ENCODE measurements at regions of chr2 and their contacts with region 1.

Region 1: GRCh38 chr2:96145036-96145847 is at the start of gene DUSP2:
- DNase-seq: peak; percentile 96
- ATAC-seq: peak; percentile 47
- H3K4me3 Mint-ChIP-seq: peak within 1 kb of the TSS; percentile 98
- H3K27ac Mint-ChIP-seq: peak within 1 kb of the TSS; percentile 98
- H3K4me1 Mint-ChIP-seq: peaks cover 53% of the 10 kb centered on the region
- H3K27me3 Mint-ChIP-seq: no peaks in the 10 kb centered on the region
- CTCF ChIP-seq: no peak
- total RNA-seq, gene DUSP2: 311 to 313 TPM

Region 2: GRCh38 chr2:96103761-96104486 is 41.3 kb before region 1 on chr2:
- CTCF ChIA-PET with region 1: no interaction called
- POLR2A ChIA-PET with region 1: no interaction called
- intact Hi-C with region 1: no loop called
- DNase-seq: no peak
- ATAC-seq: no peak
- H3K4me3 Mint-ChIP-seq: no peak overlapping the region
- H3K27ac Mint-ChIP-seq: no peak overlapping the region
- H3K4me1 Mint-ChIP-seq: no peaks in the 10 kb centered on the region
- H3K27me3 Mint-ChIP-seq: no peaks in the 10 kb centered on the region
- CTCF ChIP-seq: no peak

Region 3: GRCh38 chr2:96157651-96158553 is 12.7 kb after region 1 on chr2:
- CTCF ChIA-PET with region 1: interaction called, 21 read pairs
- POLR2A ChIA-PET with region 1: interaction called, 690 read pairs
- intact Hi-C with region 1: no loop called
- DNase-seq: peak; percentile 99
- ATAC-seq: peak; percentile 73
- H3K4me3 Mint-ChIP-seq: peak overlapping the region; percentile 42
- H3K27ac Mint-ChIP-seq: peak overlapping the region; percentile 93
- H3K4me1 Mint-ChIP-seq: peaks cover 92% of the 10 kb centered on the region
- H3K27me3 Mint-ChIP-seq: no peaks in the 10 kb centered on the region
- CTCF ChIP-seq: no peak

Region 4: DNA sequence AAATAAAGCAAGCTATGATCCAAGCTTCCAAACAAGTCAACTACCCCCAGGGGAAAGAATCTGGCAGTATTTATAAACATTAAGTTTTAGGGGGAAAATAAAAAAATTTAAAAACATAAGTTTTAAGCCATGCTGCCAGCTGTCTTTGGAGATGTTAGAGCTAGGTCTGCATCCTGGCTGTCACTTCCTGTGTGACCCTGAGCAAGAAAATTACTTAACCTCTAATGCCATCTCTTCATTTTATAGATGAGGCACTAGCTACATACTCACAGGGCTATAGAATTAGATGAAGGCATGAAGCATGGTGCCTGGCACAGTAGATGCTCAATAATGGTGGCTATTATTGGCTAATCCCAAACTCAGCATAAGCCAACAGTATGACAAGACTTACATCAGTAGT is 35.3 kb after region 1 on chr2:
- CTCF ChIA-PET with region 1: interaction called, 540 read pairs
- POLR2A ChIA-PET with region 1: interaction called, 109 read pairs
- intact Hi-C with region 1: no loop called
- DNase-seq: no peak
- ATAC-seq: peak; percentile 45
- H3K4me3 Mint-ChIP-seq: no peak overlapping the region
- H3K27ac Mint-ChIP-seq: no peak overlapping the region
- H3K4me1 Mint-ChIP-seq: peaks cover 12% of the 10 kb centered on the region
- H3K27me3 Mint-ChIP-seq: no peaks in the 10 kb centered on the region
- CTCF ChIP-seq: no peak

Region 5: DNA sequence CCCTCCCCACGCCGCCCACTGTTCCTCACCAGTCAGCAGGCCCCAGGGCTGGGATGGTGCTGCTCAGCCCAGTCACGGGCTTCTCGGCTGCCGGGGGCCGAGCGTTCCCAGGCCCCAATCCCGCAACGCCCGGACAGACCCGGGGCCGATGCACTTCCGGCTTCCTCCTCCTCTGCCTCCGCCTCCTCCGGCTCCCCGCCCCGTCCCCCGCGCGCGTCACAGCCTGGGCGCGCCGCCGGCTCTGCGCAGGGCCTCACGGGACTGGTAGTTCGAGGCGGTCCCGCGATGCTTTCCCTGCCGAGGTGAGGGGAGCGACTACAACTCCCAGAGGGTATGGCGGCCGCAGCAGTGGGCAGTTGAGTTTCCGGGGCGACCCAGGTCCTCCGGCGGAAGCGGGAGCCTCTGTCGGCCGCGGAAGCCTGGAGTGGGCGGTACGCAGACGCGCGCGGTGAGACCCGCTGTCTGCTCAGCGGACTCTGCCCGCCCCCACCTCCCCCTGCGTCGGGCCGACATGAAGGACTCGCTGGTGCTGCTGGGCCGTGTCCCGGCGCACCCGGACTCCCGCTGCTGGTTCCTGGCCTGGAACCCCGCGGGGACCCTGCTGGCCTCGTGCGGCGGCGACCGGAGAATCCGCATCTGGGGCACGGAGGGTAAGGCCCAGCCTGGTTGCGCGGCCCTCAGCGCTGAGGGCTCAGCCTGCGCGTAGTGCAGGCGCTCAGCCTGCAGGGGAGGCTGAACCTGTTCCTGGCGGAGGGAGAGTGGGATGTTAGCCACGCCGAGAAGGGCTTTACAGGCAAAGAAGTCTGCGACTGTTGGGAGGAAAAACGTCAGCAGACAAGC is 120.8 kb after region 1 on chr2 and contains the starts of genes CIAO1 and TMEM127:
- CTCF ChIA-PET with region 1: interaction called, 15 read pairs
- POLR2A ChIA-PET with region 1: interaction called, 28 read pairs
- intact Hi-C with region 1: no loop called
- DNase-seq: peak; percentile 99
- ATAC-seq: peak; percentile 95
- H3K4me3 Mint-ChIP-seq: peak within 1 kb of the TSS; percentile 85
- H3K27ac Mint-ChIP-seq: peak within 1 kb of the TSS; percentile 94
- H3K4me1 Mint-ChIP-seq: peaks cover 45% of the 10 kb centered on the region
- H3K27me3 Mint-ChIP-seq: no peaks in the 10 kb centered on the region
- CTCF ChIP-seq: peak; percentile 18
- total RNA-seq, gene CIAO1: 72.1 to 72.3 TPM
- total RNA-seq, gene TMEM127: 13.1 to 15.0 TPM

Region 6: GRCh38 chr2:96536445-96537065 is 391.3 kb after region 1 on chr2 and contains the start of gene ARID5A:
- CTCF ChIA-PET with region 1: no interaction called
- POLR2A ChIA-PET with region 1: no interaction called
- intact Hi-C with region 1: loop called (anchors 10 kb)
- DNase-seq: peak; percentile 97
- ATAC-seq: peak; percentile 64
- H3K4me3 Mint-ChIP-seq: peak within 1 kb of the TSS; percentile 87
- H3K27ac Mint-ChIP-seq: peak within 1 kb of the TSS; percentile 97
- H3K4me1 Mint-ChIP-seq: peaks cover 54% of the 10 kb centered on the region
- H3K27me3 Mint-ChIP-seq: no peaks in the 10 kb centered on the region
- CTCF ChIP-seq: peak; percentile 81
- total RNA-seq, gene ARID5A: 61.5 to 64.3 TPM